ENCODE measurements at regions of chrX and their contacts with region 1.

Region 1: GRCh38 chrX:124388562-124388961 is 42.2 kb downstream of the SH2D1A start:
- DNase-seq: peak; percentile 21 to 48 (median 37)
- ATAC-seq: peak in 1 of 4 donors; percentile 54
- H3K4me3 ChIP-seq: no peak overlapping the region
- H3K27ac ChIP-seq: no peak overlapping the region
- H3K4me1 ChIP-seq: no peaks in the 10 kb centered on the region
- H3K27me3 ChIP-seq: no peaks in the 10 kb centered on the region
- CTCF ChIP-seq: peak; percentile 50 to 86 (median 63)
- POLR2A ChIP-seq: no peak

Region 2: DNA sequence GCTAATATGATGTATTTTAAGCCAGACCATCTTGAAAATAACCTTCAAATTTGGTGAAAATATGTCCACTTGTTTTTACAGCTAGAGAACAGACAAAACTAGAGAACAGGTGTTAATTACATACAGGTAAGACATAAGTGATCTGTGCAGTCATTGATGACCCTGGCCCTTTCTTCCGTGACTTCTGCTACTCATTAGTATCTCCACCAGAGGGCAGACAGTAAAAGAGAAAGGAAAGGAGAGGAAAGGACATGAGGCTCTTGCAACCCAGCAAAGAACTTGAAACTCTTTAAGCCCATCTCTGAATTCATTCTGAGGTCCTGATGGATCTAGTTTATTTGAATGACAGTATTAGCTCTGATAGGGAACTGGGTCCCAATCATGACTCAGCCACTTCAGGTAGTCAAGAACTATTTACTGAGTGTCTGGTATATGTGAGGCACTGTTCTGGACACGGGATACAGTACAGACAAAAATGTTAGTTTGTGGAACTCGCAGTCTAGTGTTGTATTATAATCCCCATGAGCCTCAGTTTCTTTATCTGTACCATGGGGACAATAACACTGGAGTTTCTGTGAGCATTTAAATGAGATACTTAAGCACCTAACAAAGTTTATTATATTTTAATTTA is 177.1 kb before region 1 on chrX:
- intact Hi-C with region 1: loop called in 6 of 10 experiments (anchors 2 to 10 kb)
- DNase-seq: no peak
- ATAC-seq: peak in 1 of 4 donors; percentile 59
- H3K4me3 ChIP-seq: no peak overlapping the region
- H3K27ac ChIP-seq: no peak overlapping the region
- H3K4me1 ChIP-seq: peaks cover 0 to 4% (median 0%) of the 10 kb centered on the region in 12 donors
- H3K27me3 ChIP-seq: peaks cover 0 to 4% (median 0%) of the 10 kb centered on the region in 9 donors
- CTCF ChIP-seq: peak; percentile 41 to 61 (median 50)
- POLR2A ChIP-seq: no peak

Measured in heart left ventricle (tissue), 16 donors.